BJ (cell line): ENCODE measurements at regions of chr9 and their contacts with region 1.

Region 1: GRCh38 chr9:133149126-133150107 is 14.3 kb downstream of the GBGT1 start:
- DNase-seq: peak; percentile 52
- H3K4me3 ChIP-seq: peak overlapping the region; percentile 79
- H3K27me3 ChIP-seq: no peaks in the 10 kb centered on the region
- CTCF ChIP-seq: peak; percentile 24; the same call in 1 of the 2 replicates

Region 2: GRCh38 chr9:133030317-133031129 is 118.9 kb before region 1 on chr9 and contains the start of gene GTF3C5:
- CTCF ChIA-PET with region 1: interaction called, 20 read pairs
- POLR2A ChIA-PET with region 1: interaction called, 7 read pairs
- DNase-seq: peak; percentile 98
- H3K4me3 ChIP-seq: peak within 1 kb of the TSS; percentile 88
- H3K27me3 ChIP-seq: no peaks in the 10 kb centered on the region
- CTCF ChIP-seq: no peak
- polyA plus RNA-seq, gene GTF3C5: 36.0 and 47.7 TPM in 2 replicates

Region 3: DNA sequence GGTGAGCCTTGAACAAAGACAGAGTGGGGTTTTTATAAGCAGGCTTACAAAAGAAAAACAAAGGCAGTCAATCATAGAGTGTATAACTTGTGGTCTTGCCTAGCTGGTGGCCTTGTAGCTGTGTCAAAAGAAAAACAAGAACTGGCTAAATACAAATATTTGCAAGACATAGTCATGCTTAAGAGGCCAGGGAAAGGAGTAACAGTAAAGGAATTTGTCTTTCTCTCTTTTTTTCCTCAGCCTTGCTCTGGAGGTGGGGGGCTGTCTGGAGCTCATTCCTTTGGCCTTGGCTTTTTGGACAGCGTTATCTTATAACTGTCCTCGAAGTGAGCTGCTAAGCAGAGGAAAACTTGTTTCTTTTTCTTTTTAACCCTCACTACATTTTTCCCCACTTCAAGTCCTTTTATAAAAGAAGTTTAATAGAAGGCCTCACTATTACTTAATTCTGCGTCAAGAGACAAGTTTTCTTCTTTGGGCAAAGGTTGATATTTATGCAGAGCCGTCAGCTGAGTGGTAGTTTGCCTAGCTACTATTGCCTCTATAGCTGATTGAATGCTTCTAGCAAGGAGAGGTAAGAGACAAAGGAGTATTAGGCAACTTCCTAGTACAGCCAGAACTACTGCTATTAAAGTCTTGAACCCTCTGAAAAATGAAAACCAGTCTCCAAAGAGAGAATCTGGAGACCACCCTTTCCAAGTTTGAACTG is 73.3 kb before region 1 on chr9:
- CTCF ChIA-PET with region 1: interaction called, 14 read pairs
- POLR2A ChIA-PET with region 1: no interaction called
- DNase-seq: peak; percentile 67
- H3K4me3 ChIP-seq: no peak overlapping the region
- H3K27me3 ChIP-seq: 0 out of 2 replicates have a peak, but pooled peaks cover 7% of the 10 kb centered on the region
- CTCF ChIP-seq: no peak

Region 4: GRCh38 chr9:133121198-133121939 is 28.0 kb before region 1 on chr9 and contains the start of gene RALGDS:
- CTCF ChIA-PET with region 1: interaction called, 505 read pairs
- POLR2A ChIA-PET with region 1: no interaction called
- DNase-seq: no peak
- H3K4me3 ChIP-seq: peak within 1 kb of the TSS; percentile 57
- H3K27me3 ChIP-seq: no peaks in the 10 kb centered on the region
- CTCF ChIP-seq: no peak
- polyA plus RNA-seq, gene RALGDS: 18.0 and 25.1 TPM in 2 replicates

Region 5: GRCh38 chr9:133210202-133210532 is 60.8 kb after region 1 on chr9:
- CTCF ChIA-PET with region 1: no interaction called
- POLR2A ChIA-PET with region 1: no interaction called
- DNase-seq: no peak
- H3K4me3 ChIP-seq: no peak overlapping the region
- H3K27me3 ChIP-seq: peaks cover 1% of the 10 kb centered on the region; the same call in 1 of the 2 replicates
- CTCF ChIP-seq: no peak

Region 6: GRCh38 chr9:133375724-133376654 is 226.6 kb after region 1 on chr9 and contains the starts of genes STKLD1 and SURF4:
- CTCF ChIA-PET with region 1: no interaction called
- POLR2A ChIA-PET with region 1: no interaction called
- DNase-seq: peak; percentile 69
- H3K4me3 ChIP-seq: peak within 1 kb of the TSS; percentile 79
- H3K27me3 ChIP-seq: no peaks in the 10 kb centered on the region
- CTCF ChIP-seq: no peak
- polyA plus RNA-seq, gene STKLD1: 0.70 and 1.2 TPM in 2 replicates
- polyA plus RNA-seq, gene SURF4: 259 and 401 TPM in 2 replicates

Region 7: GRCh38 chr9:133459476-133460404 is 310.3 kb after region 1 on chr9 and contains the start of gene CACFD1:
- CTCF ChIA-PET with region 1: no interaction called
- POLR2A ChIA-PET with region 1: no interaction called
- DNase-seq: peak; percentile 55
- H3K4me3 ChIP-seq: peak within 1 kb of the TSS; percentile 47
- H3K27me3 ChIP-seq: no peaks in the 10 kb centered on the region
- CTCF ChIP-seq: no peak
- polyA plus RNA-seq, gene CACFD1: 15.8 and 19.1 TPM in 2 replicates